ENCODE measurements at regions of chr2 and their contacts with region 1.

Region 1: GRCh38 chr2:172465417-172466334 is 38.3 kb downstream of the ITGA6 start:
- DNase-seq: peak; percentile 51 to 87 (median 69)
- ATAC-seq: peak; percentile 40
- H3K4me3 ChIP-seq: no peak overlapping the region
- H3K4me3 Mint-ChIP-seq: peak overlapping the region; percentile 73
- H3K27ac ChIP-seq: peak overlapping the region; percentile 49 to 79
- H3K27ac Mint-ChIP-seq: peak overlapping the region; percentile 93
- H3K4me1 ChIP-seq: peaks cover 54% of the 10 kb centered on the region
- H3K4me1 Mint-ChIP-seq: peaks cover 79% of the 10 kb centered on the region
- H3K27me3 ChIP-seq: no peaks in the 10 kb centered on the region
- H3K27me3 Mint-ChIP-seq: no peaks in the 10 kb centered on the region
- CTCF ChIP-seq: peak; percentile 90

Region 2: GRCh38 chr2:171574149-171574795 is 891.4 kb before region 1 on chr2:
- CTCF ChIA-PET with region 1: no interaction called
- POLR2A ChIA-PET with region 1: no interaction called
- intact Hi-C with region 1: loop called in 1 of 2 experiments (anchors 10 kb)
- DNase-seq: peak; percentile 67 to 88 (median 76)
- ATAC-seq: peak; percentile 99
- H3K4me3 ChIP-seq: no peak overlapping the region
- H3K4me3 Mint-ChIP-seq: no peak overlapping the region
- H3K27ac ChIP-seq: no peak overlapping the region
- H3K27ac Mint-ChIP-seq: peak overlapping the region; percentile 54
- H3K4me1 ChIP-seq: peaks cover 6% of the 10 kb centered on the region
- H3K4me1 Mint-ChIP-seq: peaks cover 6% of the 10 kb centered on the region
- H3K27me3 ChIP-seq: no peaks in the 10 kb centered on the region
- H3K27me3 Mint-ChIP-seq: no peaks in the 10 kb centered on the region
- CTCF ChIP-seq: peak; percentile 92

Region 3: DNA sequence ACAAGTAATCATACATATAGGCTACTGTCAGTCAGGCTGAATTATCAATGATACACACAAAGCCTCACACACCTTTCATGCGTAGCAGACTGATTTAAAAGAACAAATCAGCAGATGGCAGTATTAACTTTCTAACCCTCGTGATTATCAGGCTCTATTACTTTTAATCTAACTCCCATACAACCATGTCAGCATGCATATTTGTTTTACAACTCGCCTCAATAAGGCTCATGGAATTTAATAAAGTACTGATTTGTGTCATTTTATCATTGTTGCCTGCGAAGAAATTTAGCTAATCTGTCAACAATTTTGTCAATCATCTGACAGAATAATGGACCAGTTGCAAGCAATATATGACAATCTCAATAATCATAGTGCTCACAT is 654.4 kb before region 1 on chr2:
- CTCF ChIA-PET with region 1: no interaction called
- POLR2A ChIA-PET with region 1: no interaction called
- intact Hi-C with region 1: loop called (anchors 2 to 5 kb)
- DNase-seq: peak in 3 of 14 experiments; percentile 23 to 31 (median 24)
- ATAC-seq: no peak
- H3K4me3 ChIP-seq: no peak overlapping the region
- H3K4me3 Mint-ChIP-seq: no peak overlapping the region
- H3K27ac ChIP-seq: no peak overlapping the region
- H3K27ac Mint-ChIP-seq: no peak overlapping the region
- H3K4me1 ChIP-seq: no peaks in the 10 kb centered on the region
- H3K4me1 Mint-ChIP-seq: no peaks in the 10 kb centered on the region
- H3K27me3 ChIP-seq: no peaks in the 10 kb centered on the region
- H3K27me3 Mint-ChIP-seq: no peaks in the 10 kb centered on the region
- CTCF ChIP-seq: peak; percentile 37

Region 4: GRCh38 chr2:172102391-172103278 is 363.0 kb before region 1 on chr2 and contains the start of gene DLX2:
- CTCF ChIA-PET with region 1: interaction called, 4 read pairs
- POLR2A ChIA-PET with region 1: interaction called, 4 read pairs
- intact Hi-C with region 1: loop called (anchors 5 kb)
- DNase-seq: peak in 8 of 14 experiments; percentile 38 to 84 (median 60)
- ATAC-seq: peak; percentile 12
- H3K4me3 ChIP-seq: peak within 1 kb of the TSS; percentile 55
- H3K4me3 Mint-ChIP-seq: peak within 1 kb of the TSS; percentile 84
- H3K27ac ChIP-seq: no peak within 1 kb of the TSS
- H3K27ac Mint-ChIP-seq: peak within 1 kb of the TSS; percentile 66
- H3K4me1 ChIP-seq: peaks cover 82% of the 10 kb centered on the region
- H3K4me1 Mint-ChIP-seq: peaks cover 50% of the 10 kb centered on the region
- H3K27me3 ChIP-seq: peaks cover 95 to 98% of the 10 kb centered on the region in 2 experiments
- H3K27me3 Mint-ChIP-seq: peaks cover 80% of the 10 kb centered on the region
- CTCF ChIP-seq: no peak
- total RNA-seq, gene DLX2: not detected

Region 5: DNA sequence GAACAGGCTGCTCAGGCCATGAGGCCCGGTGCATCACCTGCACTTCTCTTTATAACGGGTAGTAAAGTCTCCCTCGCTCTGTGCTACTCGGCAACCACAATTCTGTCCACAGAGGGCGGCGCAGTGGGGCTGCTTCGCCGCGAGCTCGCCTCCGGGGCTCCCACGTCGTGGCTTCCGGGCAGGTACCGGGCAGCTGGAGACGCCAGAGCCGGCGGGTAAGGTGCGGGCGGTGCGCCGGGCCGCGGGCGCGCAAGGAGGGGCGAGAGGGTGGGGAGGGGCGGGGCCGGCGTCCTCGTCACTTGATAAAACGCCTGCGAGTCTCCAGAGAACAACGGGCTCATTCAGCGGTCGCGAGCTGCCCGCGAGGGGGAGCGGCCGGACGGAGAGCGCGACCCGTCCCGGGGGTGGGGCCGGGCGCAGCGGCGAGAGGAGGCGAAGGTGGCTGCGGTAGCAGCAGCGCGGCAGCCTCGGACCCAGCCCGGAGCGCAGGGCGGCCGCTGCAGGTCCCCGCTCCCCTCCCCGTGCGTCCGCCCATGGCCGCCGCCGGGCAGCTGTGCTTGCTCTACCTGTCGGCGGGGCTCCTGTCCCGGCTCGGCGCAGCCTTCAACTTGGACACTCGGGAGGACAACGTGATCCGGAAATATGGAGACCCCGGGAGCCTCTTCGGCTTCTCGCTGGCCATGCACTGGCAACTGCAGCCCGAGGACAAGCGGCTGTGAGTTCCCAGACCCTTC is 38.3 kb before region 1 on chr2 and contains the start of gene ITGA6:
- CTCF ChIA-PET with region 1: interaction called, 282 read pairs
- POLR2A ChIA-PET with region 1: interaction called, 482 read pairs
- intact Hi-C with region 1: loop called (anchors 1 kb)
- DNase-seq: peak; percentile 65 to 91 (median 72)
- ATAC-seq: peak; percentile 73
- H3K4me3 ChIP-seq: peak within 1 kb of the TSS; percentile 78
- H3K4me3 Mint-ChIP-seq: peak within 1 kb of the TSS; percentile 93
- H3K27ac ChIP-seq: peak within 1 kb of the TSS; percentile 13 to 74
- H3K27ac Mint-ChIP-seq: peak within 1 kb of the TSS; percentile 89
- H3K4me1 ChIP-seq: peaks cover 51% of the 10 kb centered on the region
- H3K4me1 Mint-ChIP-seq: peaks cover 45% of the 10 kb centered on the region
- H3K27me3 ChIP-seq: no peaks in the 10 kb centered on the region
- H3K27me3 Mint-ChIP-seq: no peaks in the 10 kb centered on the region
- CTCF ChIP-seq: no peak
- total RNA-seq, gene ITGA6: 53.5 to 58.0 TPM

Region 6: DNA sequence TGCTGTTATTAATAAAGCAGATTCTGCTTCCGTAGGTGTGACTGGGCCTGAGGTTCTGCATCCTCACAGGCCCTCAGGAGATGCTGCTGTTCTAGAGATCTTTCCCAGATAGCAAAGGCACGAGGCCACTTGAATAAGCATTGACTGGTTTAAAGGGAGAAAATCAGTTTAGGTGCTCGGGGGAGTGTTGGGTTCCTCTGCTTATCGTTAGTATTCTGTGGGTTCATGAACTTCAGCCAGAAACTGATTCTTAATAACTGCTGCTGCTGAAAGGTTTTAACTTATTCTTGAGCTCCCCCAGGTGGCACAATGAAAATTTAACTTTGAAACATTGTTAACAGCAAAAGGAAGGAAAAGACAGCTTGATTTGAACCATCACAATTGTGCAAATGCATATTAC is 18.6 kb after region 1 on chr2:
- CTCF ChIA-PET with region 1: interaction called, 23 read pairs
- POLR2A ChIA-PET with region 1: interaction called, 12 read pairs
- intact Hi-C with region 1: loop called (anchors 1 to 2 kb)
- DNase-seq: peak in 4 of 14 experiments; percentile 32 to 62 (median 54)
- ATAC-seq: peak; percentile 74
- H3K4me3 ChIP-seq: no peak overlapping the region
- H3K4me3 Mint-ChIP-seq: peak overlapping the region; percentile 34
- H3K27ac ChIP-seq: no peak overlapping the region
- H3K27ac Mint-ChIP-seq: peak overlapping the region; percentile 71
- H3K4me1 ChIP-seq: peaks cover 15% of the 10 kb centered on the region
- H3K4me1 Mint-ChIP-seq: peaks cover 52% of the 10 kb centered on the region
- H3K27me3 ChIP-seq: no peaks in the 10 kb centered on the region
- H3K27me3 Mint-ChIP-seq: no peaks in the 10 kb centered on the region
- CTCF ChIP-seq: peak; percentile 68

Measured in CD4-positive, alpha-beta T cell (primary cell).